Psoas muscle (tissue), 8 donors: ENCODE measurements at regions of chr3 and their contacts with region 1.

Region 1: GRCh38 chr3:185764163-185764979 is 60.5 kb downstream of the IGF2BP2 start:
- DNase-seq: no peak
- ATAC-seq: peak in 3 of 4 donors; percentile 71 to 83 (median 76)
- H3K4me3 ChIP-seq: peak overlapping the region; percentile 16
- H3K27ac ChIP-seq: peak overlapping the region; percentile 69
- H3K4me1 ChIP-seq: peaks cover 31% of the 10 kb centered on the region
- H3K27me3 ChIP-seq: no peaks in the 10 kb centered on the region
- CTCF ChIP-seq: no peak

Region 2: DNA sequence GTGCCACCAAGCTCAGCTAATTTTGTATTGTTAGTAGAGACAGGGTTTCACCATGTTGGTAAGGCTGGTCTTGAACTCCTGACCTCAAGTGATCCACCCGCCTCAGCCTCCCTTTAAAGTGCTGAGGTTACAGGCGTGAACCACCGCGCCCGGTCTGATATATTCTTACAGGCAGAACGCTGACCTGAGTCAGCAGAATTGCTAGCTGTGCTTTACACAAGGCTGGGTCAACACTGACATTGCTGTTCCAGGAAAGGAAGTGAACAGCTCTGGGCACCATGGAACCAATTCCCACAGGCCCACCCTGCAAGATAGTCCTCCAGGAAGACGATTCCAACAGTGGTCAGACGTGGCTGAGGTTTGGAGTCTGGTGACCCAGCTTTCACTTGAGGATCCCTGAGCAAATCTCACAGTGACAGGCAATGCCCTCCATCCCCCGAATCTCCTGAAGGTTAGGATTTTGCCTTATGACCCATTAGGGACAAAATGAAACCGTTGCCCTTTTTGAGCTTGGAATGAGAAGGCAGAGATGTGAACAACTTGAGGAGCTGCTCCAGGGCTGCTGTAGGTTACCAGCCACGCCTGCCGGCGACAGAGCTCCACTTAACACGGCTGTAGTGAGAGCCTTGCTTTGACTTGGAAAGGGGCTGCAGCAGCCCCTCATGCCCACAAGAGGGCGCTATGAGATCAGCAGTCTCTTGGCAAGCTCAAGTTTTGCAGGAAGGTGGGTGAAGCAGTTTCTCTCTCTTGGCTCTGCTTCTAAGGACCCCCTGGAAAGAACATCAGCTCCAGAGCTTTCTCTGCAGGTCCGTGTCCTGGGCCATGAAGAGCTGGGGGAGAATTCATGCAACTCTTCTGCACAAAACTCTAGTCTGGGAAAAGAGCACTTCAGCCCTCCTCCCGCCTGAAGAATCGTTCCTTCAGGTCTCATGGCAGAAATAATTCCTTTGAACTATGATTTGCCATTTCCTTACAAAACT is 104.1 kb before region 1 on chr3:
- intact Hi-C with region 1: loop called in 1 of 2 experiments (anchors 5 kb)
- DNase-seq: peak; percentile 64 to 66
- ATAC-seq: peak; percentile 53 to 80 (median 66)
- H3K4me3 ChIP-seq: no peak overlapping the region
- H3K27ac ChIP-seq: no peak overlapping the region
- H3K4me1 ChIP-seq: peaks cover 5% of the 10 kb centered on the region
- H3K27me3 ChIP-seq: no peaks in the 10 kb centered on the region
- CTCF ChIP-seq: peak; percentile 84

Region 3: GRCh38 chr3:185677146-185677829 is 87.1 kb before region 1 on chr3:
- intact Hi-C with region 1: loop called in 1 of 2 experiments (anchors 5 kb)
- DNase-seq: no peak
- ATAC-seq: no peak
- H3K4me3 ChIP-seq: no peak overlapping the region
- H3K27ac ChIP-seq: no peak overlapping the region
- H3K4me1 ChIP-seq: no peaks in the 10 kb centered on the region
- H3K27me3 ChIP-seq: no peaks in the 10 kb centered on the region
- CTCF ChIP-seq: peak; percentile 43

Region 4: DNA sequence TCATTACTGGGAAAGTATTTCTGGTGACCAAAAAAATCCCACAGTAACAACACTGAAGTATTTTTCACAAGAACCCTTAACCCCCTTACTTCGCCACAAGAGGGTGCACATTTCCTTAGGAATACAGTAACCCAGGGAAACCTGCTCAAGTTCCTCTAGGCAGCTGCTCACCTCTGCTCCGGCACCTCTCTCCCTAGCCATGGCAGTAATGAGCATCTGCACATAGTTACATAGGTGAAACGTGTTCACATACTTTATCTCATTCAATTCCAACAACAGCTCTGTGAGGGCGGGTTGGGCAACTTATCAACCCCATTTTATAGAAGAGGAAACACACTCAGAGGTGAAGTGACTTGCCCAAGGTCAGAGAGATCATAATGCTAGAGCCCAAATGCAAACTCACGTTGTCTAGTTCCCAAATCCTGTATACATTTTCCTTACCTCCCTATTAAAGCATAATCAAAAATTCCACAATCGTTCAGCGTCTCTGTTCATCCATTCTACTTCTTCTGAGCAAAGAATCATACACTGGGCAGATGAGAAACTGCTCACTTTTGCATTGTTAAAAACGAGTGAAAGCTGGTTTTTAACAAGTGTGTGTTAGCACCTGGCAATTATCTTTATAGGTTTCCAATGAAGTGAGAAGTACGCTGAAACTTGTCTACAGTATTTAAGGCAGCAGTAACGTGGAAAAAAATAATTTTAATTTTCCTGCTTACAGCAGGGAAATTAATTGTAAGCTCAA is 30.2 kb before region 1 on chr3:
- intact Hi-C with region 1: loop called in 1 of 2 experiments (anchors 2 kb)
- DNase-seq: no peak
- ATAC-seq: peak in 3 of 4 donors; percentile 90 to 93 (median 93)
- H3K4me3 ChIP-seq: no peak overlapping the region
- H3K27ac ChIP-seq: no peak overlapping the region
- H3K4me1 ChIP-seq: no peaks in the 10 kb centered on the region
- H3K27me3 ChIP-seq: no peaks in the 10 kb centered on the region
- CTCF ChIP-seq: peak; percentile 75